AG04450 (cell line): ENCODE measurements at regions of chr9 and their contacts with region 1.

Region 1: GRCh38 chr9:113578882-113579282 is 115.4 kb downstream of the RGS3 start:
- DNase-seq: no peak
- H3K4me3 ChIP-seq: no peak overlapping the region
- H3K27ac ChIP-seq: peak overlapping the region; percentile 81
- H3K27me3 ChIP-seq: no peaks in the 10 kb centered on the region
- CTCF ChIP-seq: no peak

Region 2: DNA sequence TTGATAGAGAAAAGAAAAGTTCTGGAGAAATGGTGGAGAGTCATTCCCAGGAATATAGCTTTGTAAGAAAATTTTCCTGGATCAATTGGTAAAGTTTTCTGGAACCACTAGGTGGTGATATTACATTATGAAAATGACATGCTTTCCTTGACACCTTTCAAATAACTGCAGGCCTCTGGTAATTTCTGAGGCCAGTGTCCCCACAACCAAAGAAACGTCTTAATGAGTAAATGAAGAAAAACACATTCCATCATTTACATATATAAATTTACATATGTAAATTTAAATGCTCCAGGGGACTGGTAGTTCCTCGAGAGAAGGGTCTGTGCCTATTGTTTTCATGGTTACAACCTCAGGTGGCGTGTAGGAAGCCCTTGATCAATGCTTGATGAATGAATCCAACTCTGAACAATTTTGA is 132.6 kb before region 1 on chr9:
- CTCF ChIA-PET with region 1: interaction called, 34 read pairs
- POLR2A ChIA-PET with region 1: interaction called, 3 read pairs
- DNase-seq: no peak
- H3K4me3 ChIP-seq: no peak overlapping the region
- H3K27ac ChIP-seq: no peak overlapping the region
- H3K27me3 ChIP-seq: no peaks in the 10 kb centered on the region
- CTCF ChIP-seq: peak; percentile 57

Region 3: GRCh38 chr9:113564498-113565237 is 14.2 kb before region 1 on chr9:
- CTCF ChIA-PET with region 1: no interaction called
- POLR2A ChIA-PET with region 1: interaction called, 16 read pairs
- DNase-seq: no peak
- H3K4me3 ChIP-seq: peak overlapping the region; percentile 79
- H3K27ac ChIP-seq: peak overlapping the region; percentile 75
- H3K27me3 ChIP-seq: no peaks in the 10 kb centered on the region
- CTCF ChIP-seq: no peak